Naive thymus-derived CD4-positive, alpha-beta T cell (primary cell): ENCODE measurements at regions of chr10 and their contacts with region 1.

Region 1: GRCh38 chr10:32055813-32056600 is at the start of gene KIF5B:
- DNase-seq: peak; percentile 77 to 95 (median 90)
- ATAC-seq: peak; percentile 87
- H3K4me3 ChIP-seq: peak within 1 kb of the TSS; percentile 71
- H3K4me3 Mint-ChIP-seq: peak within 1 kb of the TSS; percentile 94 to 99 (median 96)
- H3K27ac ChIP-seq: peak within 1 kb of the TSS; percentile 83
- H3K27ac Mint-ChIP-seq: peak within 1 kb of the TSS; percentile 90 to 97 (median 93)
- H3K4me1 ChIP-seq: peaks cover 30 to 34% of the 10 kb centered on the region in 2 donors
- H3K4me1 Mint-ChIP-seq: peaks cover 33 to 55% (median 47%) of the 10 kb centered on the region in 7 donors
- H3K27me3 ChIP-seq: no peaks in the 10 kb centered on the region
- H3K27me3 Mint-ChIP-seq: no peaks in the 10 kb centered on the region
- total RNA-seq, gene KIF5B: 42.2 to 66.0 (median 46.3) TPM

Region 2: GRCh38 chr10:30348378-30348776 is 1707.6 kb before region 1 on chr10:
- CTCF ChIA-PET with region 1: no interaction called
- POLR2A ChIA-PET with region 1: no interaction called
- intact Hi-C with region 1: loop called in 1 of 2 experiments (anchors 10 kb)
- DNase-seq: no peak
- ATAC-seq: no peak
- H3K4me3 ChIP-seq: peak overlapping the region; percentile 86
- H3K4me3 Mint-ChIP-seq: peak overlapping the region; percentile 92 to 99 (median 97)
- H3K27ac ChIP-seq: peak overlapping the region; percentile 84
- H3K27ac Mint-ChIP-seq: peak overlapping the region; percentile 87 to 98 (median 92)
- H3K4me1 ChIP-seq: peaks cover 11 to 18% of the 10 kb centered on the region in 2 donors
- H3K4me1 Mint-ChIP-seq: peaks cover 40 to 63% (median 55%) of the 10 kb centered on the region in 7 donors
- H3K27me3 ChIP-seq: no peaks in the 10 kb centered on the region
- H3K27me3 Mint-ChIP-seq: peaks cover 0 to 5% (median 0%) of the 10 kb centered on the region in 5 donors

Region 3: GRCh38 chr10:31031558-31032257 is 1024.3 kb before region 1 on chr10 and contains the start of gene ZNF438:
- CTCF ChIA-PET with region 1: no interaction called
- POLR2A ChIA-PET with region 1: no interaction called
- intact Hi-C with region 1: loop called (anchors 1 to 5 kb)
- DNase-seq: peak; percentile 93 to 99 (median 96)
- ATAC-seq: peak; percentile 92
- H3K4me3 ChIP-seq: peak within 1 kb of the TSS; percentile 84
- H3K4me3 Mint-ChIP-seq: peak within 1 kb of the TSS; percentile 89 to 94 (median 92)
- H3K27ac ChIP-seq: peak within 1 kb of the TSS; percentile 96
- H3K27ac Mint-ChIP-seq: peak within 1 kb of the TSS; percentile 93 to 99 (median 99)
- H3K4me1 ChIP-seq: peaks cover 5% of the 10 kb centered on the region in 2 donors
- H3K4me1 Mint-ChIP-seq: peaks cover 7 to 34% (median 14%) of the 10 kb centered on the region in 7 donors
- H3K27me3 ChIP-seq: no peaks in the 10 kb centered on the region
- H3K27me3 Mint-ChIP-seq: no peaks in the 10 kb centered on the region
- total RNA-seq, gene ZNF438: 3.9 to 5.8 (median 4.0) TPM

Region 4: DNA sequence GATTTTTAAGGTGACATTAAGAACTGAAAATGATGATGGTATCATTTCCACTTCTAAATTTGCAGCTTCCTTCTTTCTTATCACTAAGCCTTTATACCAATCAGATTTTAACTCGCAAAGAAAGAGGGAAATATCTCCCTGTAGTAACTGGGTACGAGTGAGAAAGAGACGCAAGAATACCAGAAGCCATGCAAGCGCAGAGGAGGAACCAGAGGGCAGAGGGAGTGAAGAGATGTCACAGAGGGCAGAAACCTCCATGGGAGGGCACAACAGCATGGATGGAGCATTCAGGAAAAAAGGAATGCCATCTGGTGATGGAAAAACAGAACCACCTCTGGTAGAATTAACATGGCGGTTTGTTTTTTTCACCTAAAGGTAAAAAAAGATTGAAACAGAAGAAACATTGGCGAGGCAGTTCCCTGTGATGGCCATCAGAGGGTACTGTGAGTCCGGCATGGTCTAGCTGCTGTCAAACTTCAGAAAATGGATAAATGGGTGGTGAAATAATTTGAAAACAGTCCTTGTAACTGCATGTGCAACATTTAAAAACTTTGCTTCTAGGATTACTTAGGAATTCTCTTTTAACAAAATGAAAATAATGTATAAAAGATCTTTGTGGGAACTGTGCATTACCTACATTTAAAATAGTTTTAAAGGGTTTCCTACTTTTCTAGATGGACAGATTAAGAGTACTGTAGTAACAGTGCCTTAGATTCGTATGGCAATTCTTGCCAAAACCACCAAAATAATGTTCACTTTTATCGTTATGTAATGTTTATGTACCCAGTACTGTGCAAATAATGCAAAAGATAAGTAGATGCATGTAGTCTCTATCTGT is 219.2 kb before region 1 on chr10:
- CTCF ChIA-PET with region 1: no interaction called
- POLR2A ChIA-PET with region 1: no interaction called
- intact Hi-C with region 1: no loop called
- DNase-seq: peak in 4 of 9 donors; percentile 3 to 16 (median 4)
- ATAC-seq: no peak
- H3K4me3 ChIP-seq: no peak overlapping the region
- H3K4me3 Mint-ChIP-seq: no peak overlapping the region
- H3K27ac ChIP-seq: no peak overlapping the region
- H3K27ac Mint-ChIP-seq: peak overlapping the region in 1 of 9 donors; percentile 24
- H3K4me1 ChIP-seq: peaks cover 0 to 6% of the 10 kb centered on the region in 2 donors
- H3K4me1 Mint-ChIP-seq: peaks cover 0 to 21% (median 18%) of the 10 kb centered on the region in 7 donors
- H3K27me3 ChIP-seq: no peaks in the 10 kb centered on the region
- H3K27me3 Mint-ChIP-seq: no peaks in the 10 kb centered on the region

Region 5: DNA sequence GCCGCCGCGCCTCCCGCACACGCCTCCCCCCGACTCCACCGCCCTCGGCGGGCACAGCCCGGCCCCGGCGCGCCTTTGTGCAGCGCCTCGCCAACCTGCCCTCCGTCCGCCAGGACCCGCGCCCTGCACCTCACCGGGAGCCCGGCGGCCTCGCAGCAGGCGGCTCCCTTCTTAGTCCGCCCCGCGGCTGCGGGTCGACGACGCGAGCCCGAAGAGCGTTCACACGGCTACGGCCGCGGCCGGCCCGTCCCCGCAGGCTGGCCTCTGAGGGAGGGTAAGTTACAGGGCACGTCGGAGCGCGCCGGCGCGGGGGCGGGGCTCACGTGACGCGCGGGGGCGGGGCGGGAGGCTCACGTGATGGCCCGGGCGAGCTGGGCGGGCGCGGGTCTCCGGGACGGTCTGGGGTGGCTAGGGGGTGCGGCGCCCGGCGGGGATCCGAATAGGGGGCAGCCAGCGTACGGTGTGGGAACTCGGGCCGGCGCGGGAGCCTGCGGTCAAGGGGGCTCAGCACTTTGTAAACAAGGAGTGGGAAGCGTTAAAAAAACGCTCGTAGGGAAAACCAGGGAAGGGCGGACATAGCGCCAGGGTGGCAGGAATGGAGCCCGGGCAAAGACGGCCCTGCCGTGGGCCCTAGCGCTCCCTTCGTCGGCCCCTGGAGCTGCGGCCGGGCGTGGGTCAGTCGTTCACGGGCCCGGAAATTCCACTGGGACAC is 127.3 kb before region 1 on chr10 and contains the start of gene ARHGAP12:
- CTCF ChIA-PET with region 1: no interaction called
- POLR2A ChIA-PET with region 1: no interaction called
- intact Hi-C with region 1: loop called (anchors 1 kb)
- DNase-seq: peak; percentile 76 to 90 (median 85)
- ATAC-seq: peak; percentile 87
- H3K4me3 ChIP-seq: peak within 1 kb of the TSS; percentile 90
- H3K4me3 Mint-ChIP-seq: peak within 1 kb of the TSS; percentile 73 to 95 (median 92)
- H3K27ac ChIP-seq: peak within 1 kb of the TSS; percentile 84
- H3K27ac Mint-ChIP-seq: peak within 1 kb of the TSS; percentile 66 to 93 (median 86)
- H3K4me1 ChIP-seq: peaks cover 10% of the 10 kb centered on the region in 2 donors
- H3K4me1 Mint-ChIP-seq: peaks cover 30 to 51% (median 47%) of the 10 kb centered on the region in 7 donors
- H3K27me3 ChIP-seq: no peaks in the 10 kb centered on the region
- H3K27me3 Mint-ChIP-seq: peaks cover 0 to 9% (median 0%) of the 10 kb centered on the region in 5 donors
- total RNA-seq, gene ARHGAP12: 10.6 to 34.6 (median 31.4) TPM

Region 6: GRCh38 chr10:32150532-32151370 is 94.7 kb after region 1 on chr10:
- CTCF ChIA-PET with region 1: no interaction called
- POLR2A ChIA-PET with region 1: no interaction called
- intact Hi-C with region 1: loop called in 1 of 2 experiments (anchors 5 kb)
- DNase-seq: peak in 4 of 9 donors; percentile 7 to 34 (median 24)
- ATAC-seq: peak; percentile 24
- H3K4me3 ChIP-seq: no peak overlapping the region
- H3K4me3 Mint-ChIP-seq: peak overlapping the region in 8 of 10 donors; percentile 26 to 65 (median 54)
- H3K27ac ChIP-seq: no peak overlapping the region
- H3K27ac Mint-ChIP-seq: peak overlapping the region; percentile 1 to 84 (median 57)
- H3K4me1 ChIP-seq: peaks cover 0 to 7% of the 10 kb centered on the region in 2 donors
- H3K4me1 Mint-ChIP-seq: peaks cover 4 to 55% (median 23%) of the 10 kb centered on the region in 7 donors
- H3K27me3 ChIP-seq: no peaks in the 10 kb centered on the region
- H3K27me3 Mint-ChIP-seq: peaks cover 0 to 3% (median 0%) of the 10 kb centered on the region in 5 donors

Region 7: DNA sequence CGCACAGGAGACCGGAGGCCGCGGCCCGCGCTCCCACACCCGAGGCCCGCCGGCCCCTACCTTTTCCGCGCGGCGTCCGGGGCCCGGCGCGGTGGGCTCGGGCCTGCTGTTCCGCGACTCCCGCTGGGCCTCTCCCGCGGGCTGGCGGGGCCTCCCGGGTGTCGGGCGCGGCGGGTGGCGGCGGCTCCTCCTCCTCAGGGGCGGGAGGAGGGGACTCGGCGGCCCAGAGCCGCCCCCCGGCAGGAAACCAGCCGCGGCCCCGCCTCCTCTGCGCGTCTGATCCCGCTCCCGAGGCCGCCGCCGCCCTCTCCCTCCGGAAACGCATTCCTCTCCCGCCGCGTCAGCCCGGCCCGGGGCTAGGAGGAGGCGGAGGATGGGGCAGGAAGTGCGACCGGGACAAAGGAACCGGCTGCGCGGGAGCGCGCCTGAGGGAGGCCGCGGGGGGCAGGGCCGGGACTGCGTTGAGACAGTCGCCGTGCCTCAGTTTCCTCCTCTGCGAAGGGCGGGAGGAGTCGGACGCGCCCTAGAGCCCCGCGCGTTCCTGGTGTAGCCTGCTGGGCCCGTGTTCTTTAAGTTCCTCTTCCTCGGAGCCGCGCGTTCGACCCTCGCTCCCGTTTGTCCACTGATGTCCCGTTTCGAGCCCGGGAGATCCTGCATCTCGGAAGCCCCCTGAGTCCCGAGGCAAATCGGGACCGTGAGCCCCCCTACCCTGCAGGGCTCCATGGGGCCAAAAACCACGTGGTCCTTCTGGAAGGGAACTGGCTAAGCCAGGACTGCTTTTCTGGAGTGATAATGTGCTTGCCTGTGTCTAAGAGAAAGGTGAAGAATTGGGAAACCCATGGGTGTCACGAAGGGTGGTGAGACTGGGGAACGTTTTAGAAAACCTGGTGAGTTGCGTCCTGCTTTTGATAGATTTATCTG is 902.3 kb after region 1 on chr10 and contains the start of gene ITGB1:
- CTCF ChIA-PET with region 1: no interaction called
- POLR2A ChIA-PET with region 1: no interaction called
- intact Hi-C with region 1: loop called in 1 of 2 experiments (anchors 2 kb)
- DNase-seq: peak; percentile 73 to 91 (median 82)
- ATAC-seq: peak; percentile 95
- H3K4me3 ChIP-seq: peak within 1 kb of the TSS; percentile 88
- H3K4me3 Mint-ChIP-seq: peak within 1 kb of the TSS; percentile 78 to 95 (median 88)
- H3K27ac ChIP-seq: peak within 1 kb of the TSS; percentile 68
- H3K27ac Mint-ChIP-seq: peak within 1 kb of the TSS; percentile 74 to 90 (median 82)
- H3K4me1 ChIP-seq: peaks cover 7 to 8% of the 10 kb centered on the region in 2 donors
- H3K4me1 Mint-ChIP-seq: peaks cover 29 to 60% (median 54%) of the 10 kb centered on the region in 7 donors
- H3K27me3 ChIP-seq: no peaks in the 10 kb centered on the region
- H3K27me3 Mint-ChIP-seq: peaks cover 0 to 13% (median 0%) of the 10 kb centered on the region in 5 donors
- total RNA-seq, gene ITGB1: 43.2 to 205 (median 60.8) TPM